Left cardiac atrium (tissue), 4 donors: ENCODE measurements at regions of chr20 and their contacts with region 1.

Region 1: GRCh38 chr20:37384683-37385174 is 38.8 kb downstream of the SRC start:
- DNase-seq: peak; percentile 71
- ATAC-seq: peak; percentile 84 to 89

Region 2: DNA sequence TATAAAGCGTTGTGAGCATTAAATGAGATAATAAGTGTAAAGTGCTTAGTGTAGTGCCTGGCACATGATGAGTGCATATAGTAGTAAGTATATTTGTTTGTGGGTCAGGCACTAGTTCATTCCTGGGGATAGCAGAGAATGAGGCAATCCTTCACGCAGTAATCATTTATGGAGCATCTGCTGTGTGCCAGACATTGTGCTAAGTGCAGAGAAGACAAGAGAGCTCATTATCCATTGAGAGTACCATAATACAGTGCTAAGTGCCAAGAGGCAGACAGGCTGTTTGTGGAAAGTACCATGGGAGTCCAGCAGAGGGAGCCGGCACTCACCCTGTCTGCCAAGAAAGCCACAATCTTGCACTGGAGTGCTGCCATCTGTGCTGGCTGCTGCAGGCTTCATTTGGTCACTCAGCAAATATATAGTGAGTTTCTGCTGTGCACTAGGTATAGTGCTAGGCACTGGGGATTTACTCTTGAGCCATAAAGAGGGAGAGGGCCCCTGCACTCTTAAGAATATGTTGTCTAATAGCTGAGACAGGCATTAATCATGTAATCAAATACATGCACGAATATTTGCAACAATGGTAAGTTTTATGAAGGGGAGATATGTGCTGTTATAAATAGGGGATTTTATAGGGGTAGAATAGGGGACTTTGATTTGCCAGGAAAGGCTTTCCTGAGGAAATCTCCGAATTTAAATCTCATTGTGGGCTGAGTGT is 192.4 kb before region 1 on chr20:
- intact Hi-C with region 1: loop called (anchors 10 kb)
- DNase-seq: peak; percentile 89
- ATAC-seq: peak; percentile 87 to 92

Region 3: DNA sequence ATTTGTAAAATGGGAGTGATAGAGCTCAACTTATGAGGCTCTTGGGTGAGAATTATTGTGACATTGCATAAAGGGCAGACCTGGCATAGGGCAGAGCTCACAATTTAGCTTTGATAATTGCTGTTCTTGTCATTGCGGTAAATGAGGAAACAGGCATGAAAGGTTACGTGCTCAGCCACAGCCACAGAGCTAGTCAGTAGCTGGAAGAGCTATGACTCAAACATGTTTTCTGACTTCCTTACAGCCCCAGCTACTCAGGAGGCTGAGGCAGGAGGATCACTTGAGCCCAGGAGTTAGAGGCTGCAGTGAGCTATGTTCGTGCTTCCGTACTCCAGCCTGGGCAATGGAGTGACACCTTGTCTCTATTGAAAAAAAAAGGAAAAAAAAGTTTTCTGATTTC is 119.6 kb before region 1 on chr20:
- intact Hi-C with region 1: loop called (anchors 2 kb)
- DNase-seq: no peak
- ATAC-seq: no peak

Region 4: DNA sequence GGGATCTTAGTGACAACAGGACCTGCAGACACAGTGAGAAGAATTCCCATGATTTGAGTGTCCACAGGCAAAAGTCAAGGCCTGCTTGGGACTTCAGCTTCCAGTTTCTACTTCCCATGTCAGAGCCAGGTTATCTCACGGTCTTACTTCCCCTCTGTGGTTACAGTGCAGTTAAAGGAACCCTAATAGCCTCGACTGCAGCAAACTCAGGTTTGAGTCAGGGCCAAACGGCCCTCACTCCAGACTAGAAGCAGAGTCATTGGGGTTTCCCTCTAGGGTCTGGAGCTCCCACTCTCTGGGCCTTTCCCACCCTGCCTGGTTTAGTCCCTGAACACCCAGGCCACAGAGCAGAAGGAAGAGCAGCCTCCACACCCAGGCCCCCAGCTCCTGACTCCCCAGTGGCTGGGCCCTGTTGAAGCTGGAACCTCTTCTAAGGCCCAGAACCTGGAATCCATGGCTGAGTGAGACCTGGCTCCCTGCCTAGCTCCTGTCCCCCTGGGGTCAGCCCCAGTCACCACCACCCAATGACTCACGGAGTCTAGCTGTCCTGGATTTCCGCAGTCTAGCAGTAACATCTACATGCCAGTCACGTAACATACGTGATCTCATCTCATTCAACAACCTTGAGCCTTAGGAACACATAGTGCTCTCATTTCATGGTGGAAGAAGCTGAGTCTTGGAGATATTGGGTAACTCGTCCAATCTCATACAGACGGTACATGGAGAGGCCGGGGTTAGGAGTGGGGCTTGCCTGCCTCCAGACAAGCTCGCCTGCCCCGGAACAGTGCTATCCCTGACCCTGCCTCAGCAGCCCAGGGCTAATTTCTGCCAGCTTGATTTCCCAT is 113.9 kb before region 1 on chr20:
- intact Hi-C with region 1: loop called (anchors 2 kb)
- DNase-seq: no peak
- ATAC-seq: peak; percentile 28 to 60

Region 5: GRCh38 chr20:37345339-37346230 is 39.1 kb before region 1 on chr20 and contains the start of gene SRC:
- intact Hi-C with region 1: no loop called
- DNase-seq: peak; percentile 81
- ATAC-seq: peak; percentile 87 to 91
- total RNA-seq, gene SRC: 9.2 to 10.2 TPM

Region 6: GRCh38 chr20:37534401-37535157 is 149.8 kb after region 1 on chr20:
- intact Hi-C with region 1: loop called (anchors 5 to 10 kb)
- DNase-seq: no peak
- ATAC-seq: peak; percentile 85 to 92